K562 (cell line): ENCODE measurements at regions of chr3 and their contacts with region 1.

Region 1: GRCh38 chr3:130850044-130850797 is 43.7 kb upstream of the ATP2C1 start:
- DNase-seq: peak; percentile 39 to 92 (median 54)
- ATAC-seq: peak; percentile 85
- H3K4me3 ChIP-seq: peak overlapping the region; percentile 33
- H3K27ac ChIP-seq: peak overlapping the region; percentile 94
- H3K4me1 ChIP-seq: peaks cover 9 to 26% of the 10 kb centered on the region in 2 experiments
- H3K27me3 ChIP-seq: no peaks in the 10 kb centered on the region
- CTCF ChIP-seq: no peak
- EP300 ChIP-seq: peak; percentile 92
- POLR2A ChIP-seq: 0 out of 2 replicates have a peak, but pooled peaks have one; percentile 49
- RAD21 ChIP-seq: no peak; a peak in 1 of 4 replicates

Region 2: GRCh38 chr3:129878372-129878771 is 971.8 kb before region 1 on chr3:
- CTCF ChIA-PET with region 1: no interaction called
- POLR2A ChIA-PET with region 1: no interaction called
- in situ Hi-C with region 1: no loop called
- intact Hi-C with region 1: no loop called
- DNase-seq: no peak
- ATAC-seq: no peak
- H3K4me3 ChIP-seq: no peak overlapping the region
- H3K27ac ChIP-seq: no peak overlapping the region
- H3K4me1 ChIP-seq: no peaks in the 10 kb centered on the region
- H3K27me3 ChIP-seq: no peaks in the 10 kb centered on the region
- CTCF ChIP-seq: no peak
- EP300 ChIP-seq: no peak
- POLR2A ChIP-seq: no peak
- RAD21 ChIP-seq: no peak

Region 3: DNA sequence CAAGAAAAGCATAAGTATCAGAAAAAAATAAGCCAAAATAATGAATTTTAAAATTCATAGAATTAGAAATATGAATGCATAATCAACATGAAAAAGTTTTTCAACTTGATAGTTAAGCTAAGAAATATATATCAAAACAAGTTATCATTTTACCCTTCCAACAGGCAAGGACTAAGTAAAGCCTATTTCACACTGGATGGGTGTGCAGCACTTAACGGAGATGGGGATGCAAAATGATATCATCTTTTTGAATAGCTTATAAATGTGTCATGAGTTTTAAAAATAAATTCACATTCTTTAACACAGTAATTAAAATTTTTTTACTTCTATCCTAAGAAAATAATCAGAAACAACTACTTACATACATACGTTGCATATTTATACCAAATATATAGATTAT is 124.5 kb before region 1 on chr3:
- CTCF ChIA-PET with region 1: no interaction called
- POLR2A ChIA-PET with region 1: no interaction called
- in situ Hi-C with region 1: no loop called
- intact Hi-C with region 1: no loop called
- DNase-seq: no peak
- ATAC-seq: no peak
- H3K4me3 ChIP-seq: no peak overlapping the region
- H3K27ac ChIP-seq: no peak overlapping the region
- H3K4me1 ChIP-seq: no peaks in the 10 kb centered on the region
- H3K27me3 ChIP-seq: no peaks in the 10 kb centered on the region
- CTCF ChIP-seq: no peak
- EP300 ChIP-seq: no peak
- POLR2A ChIP-seq: no peak
- RAD21 ChIP-seq: no peak

Region 4: DNA sequence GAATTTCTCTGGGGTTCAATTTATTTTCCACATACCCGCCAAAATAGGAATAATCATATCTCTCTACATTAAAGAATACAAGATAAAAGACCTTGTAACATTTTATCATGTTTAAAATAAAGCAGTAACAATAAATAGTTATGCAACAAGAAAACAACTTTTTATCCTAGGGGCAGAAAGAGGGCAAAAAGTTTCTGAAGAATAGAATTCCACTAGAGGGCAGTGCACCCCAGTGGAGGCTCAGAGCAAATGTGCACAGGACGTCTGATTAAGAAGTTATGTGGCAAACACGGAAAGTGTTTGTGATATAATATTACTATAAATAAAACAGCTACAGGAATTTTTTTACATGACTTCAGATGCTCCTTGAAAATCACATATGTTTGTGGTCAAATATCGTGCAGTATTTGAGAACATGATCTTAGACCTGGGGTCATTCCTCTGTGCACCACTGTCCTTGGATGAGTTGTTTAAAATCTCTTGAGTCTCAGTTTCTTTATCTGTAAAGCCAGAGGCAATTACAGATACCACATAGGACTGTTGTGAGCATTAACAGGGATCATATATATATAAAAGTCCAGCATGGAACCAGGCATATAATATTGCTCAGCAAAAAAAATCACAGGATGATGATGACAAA is 90.4 kb before region 1 on chr3:
- CTCF ChIA-PET with region 1: no interaction called
- POLR2A ChIA-PET with region 1: no interaction called
- in situ Hi-C with region 1: no loop called
- intact Hi-C with region 1: loop called (anchors 1 kb)
- DNase-seq: peak in 3 of 4 experiments; percentile 8 to 72 (median 42)
- ATAC-seq: peak; percentile 91
- H3K4me3 ChIP-seq: no peak overlapping the region
- H3K27ac ChIP-seq: no peak overlapping the region
- H3K4me1 ChIP-seq: no peaks in the 10 kb centered on the region; a peak in 1 of 5 replicates
- H3K27me3 ChIP-seq: no peaks in the 10 kb centered on the region
- CTCF ChIP-seq: peak; percentile 67 to 79 (median 78)
- EP300 ChIP-seq: peak; percentile 7; the same call in 1 of the 2 replicates
- POLR2A ChIP-seq: no peak
- RAD21 ChIP-seq: peak; percentile 85 to 89

Region 5: GRCh38 chr3:130783629-130784028 is 66.6 kb before region 1 on chr3:
- CTCF ChIA-PET with region 1: no interaction called
- POLR2A ChIA-PET with region 1: interaction called, 3 read pairs
- in situ Hi-C with region 1: no loop called
- intact Hi-C with region 1: loop called (anchors 10 kb)
- DNase-seq: no peak
- ATAC-seq: no peak
- H3K4me3 ChIP-seq: no peak overlapping the region
- H3K27ac ChIP-seq: no peak overlapping the region
- H3K4me1 ChIP-seq: no peaks in the 10 kb centered on the region
- H3K27me3 ChIP-seq: peaks cover 0 to 2% of the 10 kb centered on the region in 2 experiments; a peak in 1 of 5 replicates
- CTCF ChIP-seq: no peak
- EP300 ChIP-seq: no peak
- POLR2A ChIP-seq: no peak
- RAD21 ChIP-seq: no peak

Region 6: DNA sequence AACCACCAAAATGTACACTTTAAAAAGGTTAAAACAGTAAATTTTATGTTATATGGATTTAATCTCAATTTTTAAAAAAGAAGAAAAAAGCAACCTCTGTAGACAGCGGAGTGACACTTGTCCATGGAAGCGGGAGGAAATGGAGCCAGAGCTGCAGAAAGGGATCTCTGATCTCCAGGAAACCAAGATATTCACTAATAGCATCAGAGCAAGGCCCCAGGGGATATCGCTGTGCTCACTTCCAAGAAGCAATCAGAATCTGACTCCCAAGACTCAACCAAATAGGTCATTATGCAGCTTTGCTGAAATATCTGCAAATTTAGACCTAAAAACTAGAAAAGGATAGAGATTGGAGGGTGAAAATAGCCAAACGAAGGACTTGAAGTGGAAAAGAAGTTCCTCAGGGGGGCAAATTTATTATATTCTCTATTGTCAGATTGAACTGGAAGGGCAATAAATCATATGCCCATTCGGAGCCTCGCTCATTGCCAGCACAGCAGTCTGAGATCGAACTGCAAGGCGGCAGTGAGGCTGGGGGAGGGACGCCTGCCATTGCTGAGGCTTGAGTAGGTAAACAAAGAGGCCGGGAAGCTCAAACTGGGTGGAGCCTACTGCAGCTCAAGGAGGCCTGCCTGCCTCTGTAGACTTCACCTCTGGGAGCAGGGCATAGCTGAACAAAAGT is 18.4 kb before region 1 on chr3:
- CTCF ChIA-PET with region 1: no interaction called
- POLR2A ChIA-PET with region 1: interaction called, 15 read pairs
- in situ Hi-C with region 1: no loop called
- intact Hi-C with region 1: loop called (anchors 2 kb)
- DNase-seq: peak in 1 of 4 experiments; percentile 28
- ATAC-seq: peak; percentile 78
- H3K4me3 ChIP-seq: no peak overlapping the region
- H3K27ac ChIP-seq: peak overlapping the region; percentile 50; the same call in 1 of the 3 replicates
- H3K4me1 ChIP-seq: peaks cover 0 to 5% of the 10 kb centered on the region in 2 experiments; a peak in 2 of 5 replicates
- H3K27me3 ChIP-seq: no peaks in the 10 kb centered on the region
- CTCF ChIP-seq: no peak
- EP300 ChIP-seq: no peak
- POLR2A ChIP-seq: no peak
- RAD21 ChIP-seq: no peak

Region 7: GRCh38 chr3:130892759-130893375 is 42.6 kb after region 1 on chr3:
- CTCF ChIA-PET with region 1: no interaction called
- POLR2A ChIA-PET with region 1: interaction called, 4 read pairs
- in situ Hi-C with region 1: no loop called
- intact Hi-C with region 1: loop called (anchors 1 kb)
- DNase-seq: peak; percentile 39 to 81 (median 52)
- ATAC-seq: peak; percentile 66
- H3K4me3 ChIP-seq: peak overlapping the region; percentile 86
- H3K27ac ChIP-seq: peak overlapping the region; percentile 97
- H3K4me1 ChIP-seq: peaks cover 8% of the 10 kb centered on the region in 2 experiments; a peak in 3 of 5 replicates
- H3K27me3 ChIP-seq: no peaks in the 10 kb centered on the region
- CTCF ChIP-seq: peak; percentile 59 to 78 (median 72); a peak in 5 of 6 replicates
- EP300 ChIP-seq: no peak
- POLR2A ChIP-seq: no peak
- RAD21 ChIP-seq: peak; percentile 83 to 86

Region 8: GRCh38 chr3:131140681-131141425 is 290.6 kb after region 1 on chr3:
- CTCF ChIA-PET with region 1: no interaction called
- POLR2A ChIA-PET with region 1: no interaction called
- in situ Hi-C with region 1: no loop called
- intact Hi-C with region 1: no loop called
- DNase-seq: no peak
- ATAC-seq: no peak
- H3K4me3 ChIP-seq: no peak overlapping the region
- H3K27ac ChIP-seq: no peak overlapping the region
- H3K4me1 ChIP-seq: no peaks in the 10 kb centered on the region
- H3K27me3 ChIP-seq: no peaks in the 10 kb centered on the region
- CTCF ChIP-seq: no peak
- EP300 ChIP-seq: no peak
- POLR2A ChIP-seq: no peak
- RAD21 ChIP-seq: no peak